ENCODE measurements at regions of chr13 and their contacts with region 1.

Region 1: GRCh38 chr13:99200432-99201167 is at the start of gene UBAC2:
- DNase-seq: peak; percentile 95 to 99 (median 98)
- ATAC-seq: peak; percentile 88
- H3K4me3 ChIP-seq: peak within 1 kb of the TSS; percentile 74
- H3K4me3 Mint-ChIP-seq: peak within 1 kb of the TSS; percentile 90 to 100 (median 97)
- H3K27ac ChIP-seq: peak within 1 kb of the TSS; percentile 99
- H3K27ac Mint-ChIP-seq: peak within 1 kb of the TSS; percentile 92 to 98 (median 95)
- H3K4me1 ChIP-seq: peaks cover 38 to 51% of the 10 kb centered on the region in 2 donors
- H3K4me1 Mint-ChIP-seq: peaks cover 42 to 74% (median 61%) of the 10 kb centered on the region in 7 donors
- H3K27me3 ChIP-seq: no peaks in the 10 kb centered on the region
- H3K27me3 Mint-ChIP-seq: peaks cover 0 to 2% (median 0%) of the 10 kb centered on the region in 5 donors
- total RNA-seq, gene UBAC2: 63.3 to 114 (median 90.2) TPM

Region 2: DNA sequence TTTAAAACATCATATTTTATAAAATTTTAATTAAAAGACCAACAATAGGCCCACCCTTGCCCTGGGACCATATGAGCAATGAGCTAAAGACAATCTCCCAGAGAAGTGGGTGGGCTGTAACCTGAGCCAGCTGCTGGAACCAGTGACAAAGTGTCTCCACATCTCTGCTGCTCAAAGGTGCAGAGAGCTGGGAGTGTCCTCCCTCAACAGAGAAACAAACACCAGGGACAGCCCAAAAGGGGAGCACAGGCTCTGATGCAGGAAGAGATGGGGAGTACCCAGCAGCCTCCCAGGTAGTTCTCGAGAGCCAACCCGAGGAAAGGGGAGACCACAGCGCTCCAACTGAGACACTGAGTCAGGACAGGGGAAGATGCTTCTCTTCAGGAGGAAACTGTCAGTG is 261.8 kb before region 1 on chr13:
- CTCF ChIA-PET with region 1: no interaction called
- POLR2A ChIA-PET with region 1: no interaction called
- intact Hi-C with region 1: no loop called
- DNase-seq: no peak
- ATAC-seq: no peak
- H3K4me3 ChIP-seq: no peak overlapping the region
- H3K4me3 Mint-ChIP-seq: no peak overlapping the region
- H3K27ac ChIP-seq: no peak overlapping the region
- H3K27ac Mint-ChIP-seq: peak overlapping the region in 7 of 9 donors; percentile 2 to 89 (median 46)
- H3K4me1 ChIP-seq: no peaks in the 10 kb centered on the region
- H3K4me1 Mint-ChIP-seq: peaks cover 2 to 65% (median 46%) of the 10 kb centered on the region in 7 donors
- H3K27me3 ChIP-seq: no peaks in the 10 kb centered on the region
- H3K27me3 Mint-ChIP-seq: no peaks in the 10 kb centered on the region

Region 3: DNA sequence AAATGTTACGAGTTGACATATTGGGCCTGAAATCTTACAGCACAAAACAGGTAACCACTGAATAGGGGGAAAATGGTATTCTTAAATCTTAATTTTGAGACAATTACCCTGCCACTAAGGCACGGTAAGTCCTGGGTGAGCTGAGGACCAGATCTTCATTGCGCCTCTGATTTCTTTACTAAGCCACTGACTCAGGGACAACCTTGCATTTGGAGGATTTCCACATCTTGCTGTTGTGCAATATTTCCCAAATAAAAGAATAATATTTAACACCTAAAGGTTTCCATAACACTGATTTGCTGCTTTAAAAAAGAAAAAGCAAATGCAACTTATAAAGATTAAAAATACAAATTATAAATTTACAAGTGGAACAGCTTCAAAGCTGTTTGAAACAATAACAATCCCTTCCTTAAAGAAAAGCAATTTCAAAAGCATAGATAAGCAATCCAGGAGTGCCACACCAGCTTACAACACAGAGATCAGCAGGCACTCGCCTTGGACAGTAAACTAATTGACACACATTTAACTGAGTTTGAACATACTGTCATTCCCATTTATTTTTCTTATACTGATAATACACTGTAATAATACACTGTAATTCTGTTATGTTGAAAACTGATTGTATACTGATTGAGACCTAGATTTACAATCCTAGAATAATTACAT is 143.2 kb before region 1 on chr13:
- CTCF ChIA-PET with region 1: no interaction called
- POLR2A ChIA-PET with region 1: no interaction called
- intact Hi-C with region 1: loop called in 1 of 2 experiments (anchors 5 kb)
- DNase-seq: no peak
- ATAC-seq: no peak
- H3K4me3 ChIP-seq: no peak overlapping the region
- H3K4me3 Mint-ChIP-seq: peak overlapping the region in 2 of 10 donors; percentile 8 to 50
- H3K27ac ChIP-seq: no peak overlapping the region
- H3K27ac Mint-ChIP-seq: peak overlapping the region in 8 of 9 donors; percentile 7 to 96 (median 74)
- H3K4me1 ChIP-seq: peaks cover 28 to 78% of the 10 kb centered on the region in 2 donors
- H3K4me1 Mint-ChIP-seq: peaks cover 46 to 99% (median 94%) of the 10 kb centered on the region in 7 donors
- H3K27me3 ChIP-seq: no peaks in the 10 kb centered on the region
- H3K27me3 Mint-ChIP-seq: peaks cover 0 to 19% (median 0%) of the 10 kb centered on the region in 5 donors

Region 4: GRCh38 chr13:99220199-99220935 is 19.8 kb after region 1 on chr13:
- CTCF ChIA-PET with region 1: interaction called, 13 read pairs
- POLR2A ChIA-PET with region 1: interaction called, 273 read pairs
- intact Hi-C with region 1: loop called (anchors 1 kb)
- DNase-seq: peak in 7 of 9 donors; percentile 47 to 69 (median 59)
- ATAC-seq: peak; percentile 37
- H3K4me3 ChIP-seq: no peak overlapping the region
- H3K4me3 Mint-ChIP-seq: peak overlapping the region; percentile 55 to 82 (median 73)
- H3K27ac ChIP-seq: peak overlapping the region; percentile 85
- H3K27ac Mint-ChIP-seq: peak overlapping the region; percentile 70 to 99 (median 96)
- H3K4me1 ChIP-seq: peaks cover 83% of the 10 kb centered on the region in 2 donors
- H3K4me1 Mint-ChIP-seq: peaks cover 61 to 99% (median 89%) of the 10 kb centered on the region in 7 donors
- H3K27me3 ChIP-seq: no peaks in the 10 kb centered on the region
- H3K27me3 Mint-ChIP-seq: no peaks in the 10 kb centered on the region

Region 5: GRCh38 chr13:99250982-99251825 is 50.6 kb after region 1 on chr13:
- CTCF ChIA-PET with region 1: interaction called, 18 read pairs
- POLR2A ChIA-PET with region 1: interaction called, 45 read pairs
- intact Hi-C with region 1: no loop called
- DNase-seq: no peak
- ATAC-seq: no peak
- H3K4me3 ChIP-seq: no peak overlapping the region
- H3K4me3 Mint-ChIP-seq: peak overlapping the region in 7 of 10 donors; percentile 2 to 64 (median 30)
- H3K27ac ChIP-seq: peak overlapping the region; percentile 48
- H3K27ac Mint-ChIP-seq: peak overlapping the region; percentile 26 to 94 (median 78)
- H3K4me1 ChIP-seq: peaks cover 19 to 30% of the 10 kb centered on the region in 2 donors
- H3K4me1 Mint-ChIP-seq: peaks cover 37 to 73% (median 70%) of the 10 kb centered on the region in 7 donors
- H3K27me3 ChIP-seq: no peaks in the 10 kb centered on the region
- H3K27me3 Mint-ChIP-seq: no peaks in the 10 kb centered on the region

Region 6: DNA sequence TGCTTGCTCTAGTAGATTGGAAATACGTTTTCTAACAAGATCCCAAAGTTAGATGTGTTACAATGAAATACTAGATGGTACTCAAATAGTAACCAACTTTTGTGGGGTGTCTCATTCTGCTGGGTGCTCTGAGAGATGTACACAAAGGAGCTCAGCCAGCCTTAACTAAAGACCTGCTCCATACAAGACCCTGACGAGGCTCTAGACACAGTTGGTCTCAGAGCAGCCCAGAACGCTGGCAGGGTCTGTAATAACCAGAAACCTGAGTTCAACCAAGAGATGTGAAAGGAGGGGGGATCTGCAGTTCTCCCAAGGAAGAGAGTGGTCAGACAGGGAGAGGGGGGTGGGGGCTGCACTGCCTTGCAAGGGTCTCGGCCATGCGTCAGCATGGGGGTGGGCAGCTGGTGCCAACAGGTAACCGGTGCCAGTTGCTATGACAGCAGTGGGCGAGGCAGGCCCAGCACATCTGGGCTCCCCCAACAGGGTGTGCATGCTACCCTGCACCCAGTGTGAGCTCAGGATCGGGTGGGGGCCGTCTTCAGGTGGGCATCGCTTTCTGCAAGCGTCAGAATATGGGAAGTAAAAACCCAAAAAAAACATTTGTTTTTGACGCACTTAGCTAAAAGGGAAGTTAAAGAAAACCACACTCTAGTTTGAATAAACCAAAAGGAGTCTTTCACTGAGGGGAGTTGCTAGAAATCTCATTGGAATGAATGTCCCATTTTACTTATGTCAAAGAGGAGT is 174.6 kb after region 1 on chr13:
- CTCF ChIA-PET with region 1: interaction called, 4 read pairs
- POLR2A ChIA-PET with region 1: interaction called, 11 read pairs
- intact Hi-C with region 1: loop called in 1 of 2 experiments (anchors 5 kb)
- DNase-seq: peak; percentile 20 to 93 (median 87)
- ATAC-seq: peak; percentile 94
- H3K4me3 ChIP-seq: peak overlapping the region; percentile 38
- H3K4me3 Mint-ChIP-seq: peak overlapping the region; percentile 50 to 87 (median 72)
- H3K27ac ChIP-seq: peak overlapping the region; percentile 88
- H3K27ac Mint-ChIP-seq: peak overlapping the region; percentile 87 to 100 (median 99)
- H3K4me1 ChIP-seq: peaks cover 67 to 84% of the 10 kb centered on the region in 2 donors
- H3K4me1 Mint-ChIP-seq: peaks cover 60 to 100% (median 95%) of the 10 kb centered on the region in 7 donors
- H3K27me3 ChIP-seq: no peaks in the 10 kb centered on the region
- H3K27me3 Mint-ChIP-seq: no peaks in the 10 kb centered on the region

Region 7: DNA sequence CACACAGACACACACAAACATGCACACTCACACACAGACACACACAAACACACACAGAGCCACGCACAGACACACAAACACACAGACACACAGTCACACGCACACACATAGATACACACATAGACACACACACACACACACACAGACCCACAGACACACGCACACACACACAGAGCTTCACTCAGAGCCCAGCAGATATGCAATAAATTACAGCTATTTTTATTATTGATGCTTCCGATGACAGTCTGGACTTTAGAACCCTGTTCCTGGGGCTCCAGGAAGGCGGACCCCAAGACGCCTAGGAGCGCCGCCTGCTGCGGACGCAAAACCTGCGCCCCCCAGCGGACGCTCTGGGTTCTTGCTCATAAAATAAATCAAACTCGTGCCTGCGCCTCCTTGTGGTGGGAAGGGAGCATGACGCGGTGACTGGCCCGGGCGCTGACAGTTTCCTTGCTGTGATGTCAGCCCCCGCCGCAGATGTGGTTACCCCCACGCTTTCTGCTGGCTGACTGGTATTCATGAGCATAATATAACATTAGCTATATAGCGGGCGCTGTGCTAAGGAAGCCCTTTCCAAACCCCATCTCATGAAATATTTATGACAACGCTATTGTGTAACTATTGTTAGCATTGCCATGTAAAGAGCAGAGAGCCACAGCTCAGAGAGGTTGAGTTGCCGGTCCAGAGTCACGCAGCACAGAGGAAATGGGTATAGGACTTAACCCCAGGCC is 236.3 kb after region 1 on chr13:
- CTCF ChIA-PET with region 1: interaction called, 4 read pairs
- POLR2A ChIA-PET with region 1: interaction called, 3 read pairs
- intact Hi-C with region 1: loop called (anchors 1 to 2 kb)
- DNase-seq: peak; percentile 92 to 98 (median 93)
- ATAC-seq: peak; percentile 69
- H3K4me3 ChIP-seq: peak overlapping the region; percentile 39
- H3K4me3 Mint-ChIP-seq: peak overlapping the region; percentile 17 to 79 (median 68)
- H3K27ac ChIP-seq: peak overlapping the region; percentile 83
- H3K27ac Mint-ChIP-seq: peak overlapping the region; percentile 67 to 99 (median 87)
- H3K4me1 ChIP-seq: peaks cover 43 to 48% of the 10 kb centered on the region in 2 donors
- H3K4me1 Mint-ChIP-seq: peaks cover 28 to 68% (median 59%) of the 10 kb centered on the region in 7 donors
- H3K27me3 ChIP-seq: no peaks in the 10 kb centered on the region
- H3K27me3 Mint-ChIP-seq: peaks cover 0 to 30% (median 0%) of the 10 kb centered on the region in 5 donors

Region 8: DNA sequence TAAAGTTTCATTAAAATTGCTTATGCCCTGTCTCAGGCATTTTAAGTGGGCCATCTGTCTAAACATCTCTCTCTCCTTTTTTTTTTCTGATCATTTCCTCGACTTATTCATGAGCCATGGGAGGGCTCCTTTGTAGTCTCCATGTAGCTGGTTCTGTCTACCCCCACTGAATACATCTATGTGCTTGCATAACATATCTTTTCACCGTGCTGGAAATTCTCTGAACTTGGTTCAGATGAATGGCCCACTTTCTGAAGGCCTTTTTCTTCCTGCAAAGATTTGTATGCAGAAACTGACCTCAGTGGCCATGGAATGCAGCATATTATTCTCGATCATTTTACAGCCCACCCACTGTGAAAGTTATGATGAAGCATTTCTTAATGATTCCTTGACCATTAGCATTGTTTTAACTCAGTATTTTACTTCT is 1162.7 kb after region 1 on chr13:
- CTCF ChIA-PET with region 1: no interaction called
- POLR2A ChIA-PET with region 1: no interaction called
- intact Hi-C with region 1: no loop called
- DNase-seq: no peak
- ATAC-seq: no peak
- H3K4me3 ChIP-seq: no peak overlapping the region
- H3K4me3 Mint-ChIP-seq: no peak overlapping the region
- H3K27ac ChIP-seq: no peak overlapping the region
- H3K27ac Mint-ChIP-seq: no peak overlapping the region
- H3K4me1 ChIP-seq: no peaks in the 10 kb centered on the region
- H3K4me1 Mint-ChIP-seq: peaks cover 0 to 3% (median 0%) of the 10 kb centered on the region in 7 donors
- H3K27me3 ChIP-seq: no peaks in the 10 kb centered on the region
- H3K27me3 Mint-ChIP-seq: no peaks in the 10 kb centered on the region